ENCODE measurements at regions of chr2 and their contacts with region 1.

Region 1: DNA sequence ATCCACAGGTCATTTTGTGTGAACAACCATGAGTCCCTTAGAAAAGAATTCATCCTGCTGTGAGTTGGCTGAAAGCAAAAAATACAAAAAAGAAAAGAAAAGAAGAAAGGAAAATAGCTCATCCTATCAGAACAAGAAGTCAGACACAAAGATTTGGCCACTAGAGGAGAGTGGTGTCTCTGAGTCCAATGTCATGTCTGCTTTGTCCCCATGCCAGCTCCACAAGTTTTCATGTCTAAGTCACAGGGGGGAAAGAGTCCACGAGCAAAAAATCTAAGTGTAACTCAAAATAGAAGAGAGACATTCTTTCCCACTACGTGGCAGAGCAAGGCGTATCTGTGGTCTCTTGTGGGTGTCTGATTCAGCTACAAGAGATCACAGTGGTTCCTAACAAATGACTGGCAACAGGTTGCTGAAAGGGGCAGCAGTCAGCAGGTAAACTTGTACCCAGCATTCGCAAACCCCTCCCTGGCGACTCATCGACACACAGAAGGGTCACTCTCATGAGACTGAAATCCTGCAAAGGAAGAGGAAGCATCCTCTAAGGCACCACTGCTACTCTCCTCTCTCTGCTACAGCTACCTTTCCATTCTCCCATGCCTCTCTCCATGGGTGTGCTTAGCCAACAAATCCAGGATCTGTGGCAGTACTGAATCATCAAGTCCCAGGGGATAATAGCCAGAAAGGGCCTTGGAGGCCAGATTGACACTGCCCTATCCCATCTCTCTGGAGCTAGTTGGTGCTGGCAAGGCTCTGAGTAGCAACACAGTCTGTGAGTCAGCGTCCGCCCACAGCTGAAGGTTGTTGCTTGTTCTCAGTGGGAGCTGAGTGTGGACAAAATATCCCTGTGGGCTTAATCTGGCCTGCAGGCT is 123.0 kb upstream of the SLC39A10 start:
- DNase-seq: peak; percentile 87
- H3K4me3 Mint-ChIP-seq: peak overlapping the region; percentile 74
- H3K27ac Mint-ChIP-seq: peak overlapping the region; percentile 98
- H3K4me1 Mint-ChIP-seq: peaks cover 80% of the 10 kb centered on the region
- H3K27me3 Mint-ChIP-seq: no peaks in the 10 kb centered on the region

Region 2: DNA sequence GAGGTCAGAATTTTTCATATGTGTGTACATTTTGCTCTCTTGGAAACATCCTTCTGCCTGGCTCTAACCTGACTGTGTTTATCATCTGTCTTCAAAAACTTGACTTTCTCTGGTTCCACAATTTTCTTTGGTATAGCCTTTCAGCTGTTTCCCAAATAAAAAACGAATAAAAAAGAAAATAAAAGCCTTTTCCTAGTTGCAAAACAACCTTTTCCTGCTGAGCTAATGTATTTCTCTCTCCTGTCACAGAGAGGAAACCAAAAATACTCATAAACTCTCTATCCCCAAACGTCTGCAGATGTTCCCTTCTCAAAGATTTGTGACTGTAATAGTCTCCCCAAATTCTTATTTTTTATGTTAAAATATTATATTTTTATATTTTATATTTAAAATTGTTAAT is 382.3 kb before region 1 on chr2:
- CTCF ChIA-PET with region 1: no interaction called
- POLR2A ChIA-PET with region 1: no interaction called
- intact Hi-C with region 1: no loop called
- DNase-seq: no peak
- H3K4me3 Mint-ChIP-seq: no peak overlapping the region
- H3K27ac Mint-ChIP-seq: no peak overlapping the region
- H3K4me1 Mint-ChIP-seq: no peaks in the 10 kb centered on the region
- H3K27me3 Mint-ChIP-seq: no peaks in the 10 kb centered on the region

Region 3: GRCh38 chr2:195318440-195319111 is 215.4 kb before region 1 on chr2:
- CTCF ChIA-PET with region 1: no interaction called
- POLR2A ChIA-PET with region 1: no interaction called
- intact Hi-C with region 1: no loop called
- DNase-seq: peak; percentile 35
- H3K4me3 Mint-ChIP-seq: no peak overlapping the region
- H3K27ac Mint-ChIP-seq: no peak overlapping the region
- H3K4me1 Mint-ChIP-seq: peaks cover 8% of the 10 kb centered on the region
- H3K27me3 Mint-ChIP-seq: no peaks in the 10 kb centered on the region

Region 4: GRCh38 chr2:195442458-195443175 is 91.4 kb before region 1 on chr2:
- CTCF ChIA-PET with region 1: no interaction called
- POLR2A ChIA-PET with region 1: no interaction called
- intact Hi-C with region 1: loop called (anchors 2 kb)
- DNase-seq: no peak
- H3K4me3 Mint-ChIP-seq: no peak overlapping the region
- H3K27ac Mint-ChIP-seq: peak overlapping the region; percentile 20
- H3K4me1 Mint-ChIP-seq: peaks cover 9% of the 10 kb centered on the region
- H3K27me3 Mint-ChIP-seq: no peaks in the 10 kb centered on the region

Region 5: DNA sequence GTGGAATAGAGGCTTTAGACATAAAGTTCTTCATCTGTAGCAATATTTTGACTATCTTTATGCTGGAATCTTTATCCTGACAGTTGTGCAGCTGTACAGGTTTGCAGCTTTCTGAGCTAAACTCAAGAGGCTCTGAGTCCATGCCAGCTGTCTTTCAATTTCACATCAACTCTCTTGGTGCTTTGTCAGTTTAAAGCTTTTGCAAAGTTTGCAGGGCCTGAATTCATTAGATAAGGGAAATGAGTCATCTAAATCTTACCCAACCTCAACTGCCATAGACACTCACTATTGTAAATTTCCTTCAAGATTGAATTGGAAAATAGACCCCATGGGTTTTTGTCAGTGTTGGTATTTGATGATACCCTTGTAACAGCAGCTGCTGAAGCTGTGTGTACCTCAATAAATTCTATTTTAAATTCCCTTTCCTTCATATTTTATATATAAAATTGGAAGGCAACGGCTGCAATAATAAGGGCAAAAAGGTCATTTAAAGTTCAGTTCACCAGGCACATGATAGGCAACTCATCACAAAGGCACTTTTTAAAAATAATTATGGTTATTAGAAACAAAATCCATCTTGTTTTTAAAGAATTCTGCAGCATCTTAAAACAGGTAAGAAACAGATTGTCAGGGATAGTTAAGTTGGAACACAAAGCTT is 46.9 kb before region 1 on chr2:
- CTCF ChIA-PET with region 1: interaction called, 5 read pairs
- POLR2A ChIA-PET with region 1: interaction called, 4 read pairs
- intact Hi-C with region 1: loop called (anchors 1 kb)
- DNase-seq: no peak
- H3K4me3 Mint-ChIP-seq: no peak overlapping the region
- H3K27ac Mint-ChIP-seq: peak overlapping the region; percentile 57
- H3K4me1 Mint-ChIP-seq: peaks cover 22% of the 10 kb centered on the region
- H3K27me3 Mint-ChIP-seq: no peaks in the 10 kb centered on the region

Region 6: DNA sequence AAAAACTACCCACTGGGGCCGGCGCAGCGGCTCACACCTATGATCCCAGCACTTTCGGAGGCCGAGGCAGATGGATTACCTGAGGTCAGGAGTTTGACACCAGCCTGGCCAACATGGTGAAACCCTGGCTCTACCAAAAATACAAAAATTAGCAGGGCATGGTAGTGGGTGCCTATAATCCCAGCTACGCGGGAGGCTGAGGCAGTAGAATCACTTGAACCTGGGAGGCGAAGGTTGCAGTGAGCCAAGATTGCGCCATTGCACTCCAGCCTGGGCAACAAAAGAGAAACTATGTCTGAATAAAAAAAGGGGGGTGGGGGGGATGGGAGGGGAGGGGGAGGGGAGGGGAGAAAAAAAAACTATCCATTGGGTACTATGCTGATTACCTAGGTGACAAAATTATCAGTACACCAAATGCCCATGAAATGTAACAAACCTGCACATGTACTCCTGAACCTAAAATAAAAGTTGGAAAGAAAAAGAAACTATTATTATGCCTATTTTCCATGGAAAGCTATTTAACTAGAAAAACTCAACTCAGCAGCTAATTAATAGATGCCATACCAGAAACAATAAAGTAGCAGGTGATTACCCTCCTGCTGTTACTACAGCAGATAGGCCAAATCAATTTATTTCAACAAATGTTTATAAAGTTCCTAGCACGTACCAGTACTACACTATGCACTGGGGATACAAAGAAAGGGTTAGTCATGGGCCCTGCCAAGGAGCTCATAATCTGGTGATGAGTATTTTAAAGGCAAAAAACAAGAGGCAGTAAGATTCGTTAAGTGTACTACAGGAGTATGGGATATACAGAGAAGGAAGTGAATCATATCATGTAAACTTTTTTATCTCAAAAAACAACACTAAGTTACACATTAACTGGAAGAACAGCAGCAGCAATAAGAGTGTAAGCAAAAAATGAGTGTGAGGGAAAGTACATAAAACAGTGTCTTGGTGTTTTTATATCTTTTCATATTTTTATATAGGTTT is 10.2 kb after region 1 on chr2:
- CTCF ChIA-PET with region 1: interaction called, 31 read pairs
- POLR2A ChIA-PET with region 1: interaction called, 47 read pairs
- intact Hi-C with region 1: loop called (anchors 1 kb)
- DNase-seq: peak; percentile 58
- H3K4me3 Mint-ChIP-seq: peak overlapping the region; percentile 23
- H3K27ac Mint-ChIP-seq: peak overlapping the region; percentile 91
- H3K4me1 Mint-ChIP-seq: peaks cover 57% of the 10 kb centered on the region
- H3K27me3 Mint-ChIP-seq: no peaks in the 10 kb centered on the region

Region 7: GRCh38 chr2:195575879-195576401 is 41.9 kb after region 1 on chr2:
- CTCF ChIA-PET with region 1: interaction called, 4 read pairs
- POLR2A ChIA-PET with region 1: no interaction called
- intact Hi-C with region 1: loop called (anchors 1 kb)
- DNase-seq: no peak
- H3K4me3 Mint-ChIP-seq: no peak overlapping the region
- H3K27ac Mint-ChIP-seq: peak overlapping the region; percentile 64
- H3K4me1 Mint-ChIP-seq: peaks cover 68% of the 10 kb centered on the region
- H3K27me3 Mint-ChIP-seq: no peaks in the 10 kb centered on the region

Region 8: DNA sequence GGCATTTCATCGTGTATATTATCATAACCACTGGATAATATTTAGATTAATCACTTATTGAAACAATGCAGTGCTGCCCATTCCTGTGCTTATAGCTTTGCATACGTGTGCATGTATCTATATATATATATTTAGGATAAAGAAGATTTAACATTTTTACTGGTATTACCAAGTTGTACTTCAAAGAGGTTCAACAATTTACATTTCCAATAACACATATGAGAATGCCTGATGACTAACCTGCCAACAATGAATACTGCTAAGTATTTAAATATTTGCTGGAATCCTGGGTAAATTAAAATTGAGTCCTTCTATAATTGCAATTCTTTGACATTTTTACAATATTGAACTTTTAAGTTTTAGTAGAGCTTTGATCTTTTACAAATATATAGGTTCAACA is 234.4 kb after region 1 on chr2:
- CTCF ChIA-PET with region 1: no interaction called
- POLR2A ChIA-PET with region 1: no interaction called
- intact Hi-C with region 1: no loop called
- DNase-seq: no peak
- H3K4me3 Mint-ChIP-seq: no peak overlapping the region
- H3K27ac Mint-ChIP-seq: no peak overlapping the region
- H3K4me1 Mint-ChIP-seq: no peaks in the 10 kb centered on the region
- H3K27me3 Mint-ChIP-seq: no peaks in the 10 kb centered on the region

Region 9: DNA sequence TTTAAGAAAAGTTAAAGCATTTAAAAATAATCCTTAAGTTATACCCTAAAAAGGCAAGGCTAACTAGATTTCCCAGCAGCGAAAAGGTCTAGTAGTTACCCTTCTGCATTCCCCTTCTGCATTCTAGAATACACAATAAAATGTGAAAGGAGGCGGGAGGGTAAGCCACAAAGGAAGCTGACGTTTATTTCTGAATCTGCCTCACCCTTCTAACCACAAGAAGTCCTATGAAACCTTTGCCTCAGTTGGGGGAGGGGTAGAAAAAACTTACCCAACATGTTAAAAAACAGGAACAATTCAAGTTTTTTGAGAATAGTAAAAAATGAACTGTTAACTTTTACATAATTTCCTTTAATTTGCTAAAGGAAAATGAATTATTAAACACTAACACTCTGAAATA is 626.1 kb after region 1 on chr2:
- CTCF ChIA-PET with region 1: no interaction called
- POLR2A ChIA-PET with region 1: no interaction called
- intact Hi-C with region 1: loop called (anchors 5 kb)
- DNase-seq: peak; percentile 76
- H3K4me3 Mint-ChIP-seq: peak overlapping the region; percentile 39
- H3K27ac Mint-ChIP-seq: peak overlapping the region; percentile 96
- H3K4me1 Mint-ChIP-seq: peaks cover 77% of the 10 kb centered on the region
- H3K27me3 Mint-ChIP-seq: no peaks in the 10 kb centered on the region

Measured in activated CD4-positive, alpha-beta memory T cell treated with anti-CD3 and anti-CD28 coated beads for 36 hours (primary cell).